WTC11 (cell line): ENCODE measurements at regions of chr18 and their contacts with region 1.

Region 1: DNA sequence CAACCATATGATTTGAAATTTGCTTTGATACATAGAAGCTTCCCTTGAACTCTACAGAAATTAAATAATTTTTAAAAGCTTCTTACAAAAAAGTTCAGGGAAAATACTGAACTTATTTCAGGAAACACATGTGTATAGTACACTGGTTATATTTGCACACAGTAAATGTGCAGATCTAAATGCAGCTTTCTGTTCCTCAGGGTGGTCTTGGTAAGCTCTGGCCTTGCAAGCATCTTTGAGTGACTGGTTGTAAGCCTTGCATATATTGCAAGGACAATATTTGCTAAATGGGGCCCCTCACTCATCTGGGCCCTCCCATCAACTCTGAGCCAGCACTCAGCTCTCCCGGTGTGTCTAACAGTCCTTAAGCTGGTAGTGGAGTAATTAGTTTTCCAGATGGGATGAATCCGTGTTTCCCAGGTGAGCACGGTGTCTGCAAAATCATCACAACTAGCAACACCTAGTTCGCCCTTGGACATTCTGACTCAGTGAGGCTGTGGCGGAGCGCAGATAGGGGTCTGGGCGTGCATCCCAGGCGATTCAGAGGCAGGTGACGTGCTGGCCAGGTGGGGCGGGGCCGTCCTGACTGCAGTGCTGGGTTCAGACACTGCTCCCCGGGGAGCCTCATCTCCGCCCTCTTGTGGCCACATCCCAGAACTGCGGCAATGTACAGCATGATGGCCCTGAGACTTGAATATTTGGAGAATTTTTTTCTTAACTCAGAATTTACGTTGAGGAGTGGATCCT is 149.6 kb downstream of the MBP start:
- DNase-seq: peak; percentile 97
- ATAC-seq: peak; percentile 93
- H3K4me3 Mint-ChIP-seq: no peak overlapping the region
- H3K27ac Mint-ChIP-seq: 0 out of 2 replicates have a peak overlapping the region, but pooled peaks have one; percentile 43
- H3K4me1 Mint-ChIP-seq: peaks cover 45% of the 10 kb centered on the region
- H3K27me3 Mint-ChIP-seq: no peaks in the 10 kb centered on the region
- CTCF ChIP-seq: peak; percentile 88

Region 2: DNA sequence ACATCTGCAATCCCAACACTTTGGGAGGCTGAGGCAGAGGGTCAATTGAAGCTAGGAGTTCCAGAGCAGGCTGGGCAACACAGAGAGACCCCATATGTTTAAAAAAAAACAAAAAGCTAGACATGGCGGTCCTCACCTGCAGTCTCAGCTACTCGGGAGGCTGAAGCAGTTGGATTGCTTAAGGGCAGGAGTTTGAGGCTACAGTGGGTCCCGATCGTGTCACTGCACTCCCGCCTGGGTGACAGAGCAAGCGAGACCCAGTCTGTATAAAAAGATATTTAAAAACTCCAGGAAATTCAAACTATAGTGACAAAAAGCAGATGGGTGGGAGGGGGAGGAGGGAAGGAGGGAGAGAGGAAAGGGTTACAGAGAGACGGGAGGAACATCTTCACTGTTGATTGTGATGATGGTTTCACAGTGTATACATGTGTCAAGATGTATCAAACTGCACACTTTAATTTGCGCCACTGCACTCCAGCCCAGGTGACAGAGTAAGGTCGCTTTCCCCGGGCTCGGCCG is 161.6 kb before region 1 on chr18:
- CTCF ChIA-PET with region 1: no interaction called
- POLR2A ChIA-PET with region 1: no interaction called
- DNase-seq: no peak
- ATAC-seq: no peak
- H3K4me3 Mint-ChIP-seq: peak overlapping the region; percentile 87
- H3K27ac Mint-ChIP-seq: no peak overlapping the region; the same call in 1 of the 2 replicates
- H3K4me1 Mint-ChIP-seq: peaks cover 28% of the 10 kb centered on the region
- H3K27me3 Mint-ChIP-seq: no peaks in the 10 kb centered on the region; the same call in 1 of the 2 replicates
- CTCF ChIP-seq: no peak

Region 3: DNA sequence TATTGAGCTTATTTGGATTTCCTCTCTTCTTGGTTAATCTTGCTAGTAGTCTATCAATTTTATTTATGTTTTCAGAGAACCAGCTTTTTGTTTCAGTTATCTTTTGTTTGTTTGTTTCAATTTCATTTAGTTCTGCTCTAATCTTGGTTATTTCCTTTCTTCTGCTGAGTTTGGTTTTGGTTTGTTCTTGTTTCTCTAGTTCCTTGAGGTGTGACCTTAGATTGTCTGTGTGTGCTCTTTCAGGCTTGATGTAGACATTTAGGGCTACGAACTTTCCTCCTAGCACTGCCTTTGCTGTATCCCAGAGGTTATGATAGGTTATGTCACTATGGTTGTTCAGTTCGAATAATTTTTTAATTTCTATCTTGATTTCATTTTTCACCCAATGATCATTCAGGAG is 19.1 kb before region 1 on chr18:
- CTCF ChIA-PET with region 1: interaction called, 17 read pairs
- POLR2A ChIA-PET with region 1: no interaction called
- DNase-seq: no peak
- ATAC-seq: no peak
- H3K4me3 Mint-ChIP-seq: no peak overlapping the region
- H3K27ac Mint-ChIP-seq: no peak overlapping the region; the same call in 1 of the 2 replicates
- H3K4me1 Mint-ChIP-seq: peaks cover 8% of the 10 kb centered on the region
- H3K27me3 Mint-ChIP-seq: no peaks in the 10 kb centered on the region
- CTCF ChIP-seq: no peak